Common myeloid progenitor, CD34-positive (primary cell): ENCODE measurements at regions of chr16 and their contacts with region 1.

Region 1: DNA sequence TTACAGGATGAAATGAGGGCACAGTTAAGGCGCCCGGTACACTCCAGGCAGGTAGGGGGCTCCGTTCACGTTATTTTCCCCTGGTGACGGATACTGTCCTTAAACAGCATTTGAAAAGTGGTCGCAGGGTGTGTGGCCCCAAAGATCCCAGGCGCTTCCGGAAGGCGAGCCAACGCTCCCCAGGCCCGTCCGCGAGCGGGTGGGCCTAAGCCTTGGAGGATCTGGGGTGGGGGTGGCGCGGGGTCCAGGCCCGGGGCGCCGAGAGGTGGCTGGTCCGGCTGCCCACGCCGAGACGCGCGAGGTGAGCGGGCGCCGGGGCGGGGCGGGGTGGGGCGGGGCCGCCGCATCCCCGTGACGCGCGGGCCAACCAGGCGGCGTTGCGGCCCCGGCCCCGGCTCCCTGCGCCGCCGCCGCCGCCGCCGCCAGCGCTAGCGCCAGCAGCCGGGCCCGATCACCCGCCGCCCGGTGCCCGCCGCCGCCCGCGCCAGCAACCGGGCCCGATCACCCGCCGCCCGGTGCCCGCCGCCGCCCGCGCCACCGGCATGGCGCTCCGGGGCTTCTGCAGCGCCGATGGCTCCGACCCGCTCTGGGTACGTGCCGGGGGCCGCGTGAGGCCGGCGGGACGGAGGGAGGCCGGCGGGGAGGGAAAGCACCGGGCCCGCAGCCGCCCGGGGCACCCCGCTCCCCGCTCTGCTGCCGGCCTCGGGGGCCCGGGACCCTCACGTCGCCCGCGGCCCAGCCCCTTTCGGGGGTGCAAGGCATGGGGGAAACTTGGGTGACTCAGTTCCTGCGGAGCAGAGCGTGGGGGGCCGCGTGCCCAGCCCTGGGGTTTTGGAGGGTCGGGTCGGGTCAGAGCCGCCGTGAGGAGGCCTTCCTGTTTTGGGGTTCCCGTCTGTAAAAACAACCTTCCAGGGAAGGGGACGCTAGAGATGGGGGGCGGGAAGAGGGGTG is at the start of gene ABCC1:
- DNase-seq: peak; percentile 65 to 79 (median 73)
- H3K4me3 ChIP-seq: peak within 1 kb of the TSS; percentile 65 to 94 (median 87)
- H3K27ac ChIP-seq: peak within 1 kb of the TSS; percentile 96
- H3K4me1 ChIP-seq: peaks cover 11 to 50% (median 43%) of the 10 kb centered on the region in 4 experiments
- H3K27me3 ChIP-seq: no peaks in the 10 kb centered on the region

Region 2: GRCh38 chr16:15996432-15997109 is 47.1 kb after region 1 on chr16:
- CTCF ChIA-PET with region 1: interaction called, 7 read pairs
- POLR2A ChIA-PET with region 1: interaction called, 12 read pairs
- DNase-seq: no peak
- H3K4me3 ChIP-seq: no peak overlapping the region
- H3K27ac ChIP-seq: peak overlapping the region in 1 of 2 experiments; percentile 92
- H3K4me1 ChIP-seq: peaks cover 4 to 58% (median 49%) of the 10 kb centered on the region in 4 experiments
- H3K27me3 ChIP-seq: no peaks in the 10 kb centered on the region